Heart right ventricle (tissue), 16 donors: ENCODE measurements at regions of chr9 and their contacts with region 1.

Region 1: GRCh38 chr9:19048966-19049916 is at the start of gene RRAGA:
- DNase-seq: peak; percentile 94 to 95
- ATAC-seq: peak; percentile 96 to 98 (median 97)
- H3K4me3 ChIP-seq: peak within 1 kb of the TSS; percentile 64 to 89 (median 80)
- H3K27ac ChIP-seq: peak within 1 kb of the TSS; percentile 88 to 97 (median 95)
- H3K4me1 ChIP-seq: peaks cover 4 to 52% (median 31%) of the 10 kb centered on the region in 9 donors
- H3K27me3 ChIP-seq: no peaks in the 10 kb centered on the region
- CTCF ChIP-seq: peak; percentile 79 to 94 (median 87)
- total RNA-seq, gene RRAGA: 74.7 to 97.8 (median 81.3) TPM

Region 2: DNA sequence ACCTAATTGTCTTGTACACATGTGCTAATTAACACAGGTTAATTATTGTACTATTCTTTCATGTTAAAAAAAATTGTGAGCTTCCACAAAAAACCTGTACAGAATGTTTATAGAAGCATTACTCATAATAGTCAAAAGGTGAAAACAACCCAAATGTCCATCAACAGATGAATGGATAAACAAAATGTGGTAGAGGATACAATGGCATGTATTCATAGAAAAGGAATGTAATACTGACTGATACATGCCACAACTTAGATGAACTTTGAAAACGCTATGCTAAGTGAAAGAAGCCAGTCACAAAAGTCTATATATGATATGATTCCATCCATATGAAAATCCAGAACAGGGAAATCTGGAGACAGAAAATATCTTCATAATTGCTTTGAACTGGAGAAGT is 25.6 kb after region 1 on chr9:
- intact Hi-C with region 1: loop called in 1 of 10 experiments (anchors 1 kb)
- DNase-seq: no peak
- ATAC-seq: no peak
- H3K4me3 ChIP-seq: no peak overlapping the region
- H3K27ac ChIP-seq: no peak overlapping the region
- H3K4me1 ChIP-seq: no peaks in the 10 kb centered on the region
- H3K27me3 ChIP-seq: no peaks in the 10 kb centered on the region
- CTCF ChIP-seq: no peak

Region 3: DNA sequence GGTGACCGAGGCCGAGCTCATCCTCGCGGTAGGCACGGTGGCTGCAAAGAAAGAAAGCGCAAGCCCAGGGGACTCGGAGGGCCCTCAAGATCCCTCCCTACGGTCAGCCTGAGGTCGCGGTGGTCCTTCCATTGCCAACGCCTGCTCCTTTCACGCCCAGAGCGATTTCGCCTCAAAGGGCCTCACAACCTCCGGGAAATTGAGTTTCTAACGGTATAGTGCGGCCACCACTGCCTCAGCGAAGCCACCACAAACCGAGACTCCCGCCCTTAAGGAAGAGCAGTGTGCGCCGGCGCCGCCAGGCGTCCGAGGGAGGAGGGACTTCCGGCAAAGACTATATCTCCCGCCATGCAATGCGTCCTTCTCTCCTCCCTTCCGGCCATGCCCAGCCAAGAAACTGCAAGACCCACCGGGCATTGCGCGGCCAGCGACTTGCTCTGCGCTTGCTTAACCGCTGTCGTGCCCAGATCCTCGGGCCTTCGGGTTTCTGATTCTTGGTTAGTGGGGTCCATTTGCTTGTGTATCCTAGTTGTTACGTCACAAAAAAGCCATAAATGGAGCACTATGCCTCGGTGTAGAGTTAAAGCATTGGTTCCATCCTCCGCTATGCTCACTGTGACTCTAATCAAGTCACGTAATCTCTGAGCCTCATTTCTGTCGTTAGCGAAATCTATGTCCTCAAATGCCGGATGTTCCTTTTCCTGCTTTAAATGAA is 53.5 kb after region 1 on chr9 and contains the start of gene HAUS6:
- intact Hi-C with region 1: loop called in 3 of 10 experiments (anchors 2 to 5 kb)
- DNase-seq: peak; percentile 95 to 97
- ATAC-seq: peak; percentile 99 to 100 (median 100)
- H3K4me3 ChIP-seq: peak within 1 kb of the TSS; percentile 64 to 91 (median 78)
- H3K27ac ChIP-seq: peak within 1 kb of the TSS; percentile 44 to 91 (median 90)
- H3K4me1 ChIP-seq: peaks cover 0 to 26% (median 17%) of the 10 kb centered on the region in 9 donors
- H3K27me3 ChIP-seq: no peaks in the 10 kb centered on the region
- CTCF ChIP-seq: peak; percentile 22 to 71 (median 50)
- total RNA-seq, gene HAUS6: 4.9 to 10.4 (median 7.2) TPM

Region 4: DNA sequence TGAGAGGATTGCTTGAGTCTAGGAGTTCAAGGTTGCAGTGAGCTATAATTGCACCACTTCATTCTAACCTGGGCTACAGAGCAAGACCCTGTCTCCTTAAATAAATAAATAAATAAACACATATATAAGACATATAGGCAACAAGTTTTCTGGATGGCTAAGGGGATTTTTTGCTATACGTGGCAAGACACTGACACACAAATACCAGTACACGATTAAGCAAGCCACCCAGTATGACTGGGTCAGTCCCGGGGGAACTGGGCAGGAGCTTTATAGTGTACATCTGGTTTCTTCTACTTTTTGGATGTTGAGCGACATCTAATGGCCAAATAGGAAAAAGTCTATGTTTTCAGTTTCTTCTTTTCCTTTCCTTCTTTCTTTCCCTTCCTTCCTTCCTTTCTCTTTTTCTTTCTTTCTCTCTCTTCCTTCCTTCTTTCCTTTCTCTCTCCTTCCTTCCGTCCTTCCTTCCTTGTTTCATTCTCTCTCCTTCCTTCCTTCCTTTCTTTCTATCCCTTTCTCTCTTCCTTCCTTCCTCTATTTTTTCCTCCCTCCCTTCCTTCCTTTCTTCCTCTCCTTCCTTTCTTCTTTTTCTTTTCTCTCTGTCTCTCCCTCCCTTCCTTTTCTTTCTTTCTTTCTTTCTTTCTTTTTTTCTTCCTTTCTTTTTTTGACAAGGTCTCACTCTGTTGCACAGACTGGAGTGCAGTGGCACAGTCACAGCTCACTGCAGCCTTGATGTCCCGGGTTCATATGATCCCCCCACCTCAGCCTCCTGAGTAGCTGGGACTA is 125.1 kb after region 1 on chr9:
- intact Hi-C with region 1: loop called in 7 of 10 experiments (anchors 2 to 10 kb)
- DNase-seq: peak; percentile 50 to 64
- ATAC-seq: peak; percentile 72 to 96 (median 86)
- H3K4me3 ChIP-seq: peak overlapping the region in 2 of 10 donors; percentile 2 to 7
- H3K27ac ChIP-seq: peak overlapping the region in 1 of 10 donors; percentile 46
- H3K4me1 ChIP-seq: peaks cover 0 to 30% (median 11%) of the 10 kb centered on the region in 9 donors
- H3K27me3 ChIP-seq: no peaks in the 10 kb centered on the region
- CTCF ChIP-seq: peak; percentile 27 to 80 (median 71)

Region 5: GRCh38 chr9:19201899-19202891 is 153.0 kb after region 1 on chr9:
- intact Hi-C with region 1: no loop called
- DNase-seq: no peak
- ATAC-seq: peak in 1 of 8 donors; percentile 22
- H3K4me3 ChIP-seq: no peak overlapping the region
- H3K27ac ChIP-seq: no peak overlapping the region
- H3K4me1 ChIP-seq: peaks cover 0 to 8% (median 0%) of the 10 kb centered on the region in 9 donors
- H3K27me3 ChIP-seq: no peaks in the 10 kb centered on the region
- CTCF ChIP-seq: no peak